Posterior cingulate gyrus (tissue), 11 donors: ENCODE measurements at regions of chr14 and their contacts with region 1.

Region 1: DNA sequence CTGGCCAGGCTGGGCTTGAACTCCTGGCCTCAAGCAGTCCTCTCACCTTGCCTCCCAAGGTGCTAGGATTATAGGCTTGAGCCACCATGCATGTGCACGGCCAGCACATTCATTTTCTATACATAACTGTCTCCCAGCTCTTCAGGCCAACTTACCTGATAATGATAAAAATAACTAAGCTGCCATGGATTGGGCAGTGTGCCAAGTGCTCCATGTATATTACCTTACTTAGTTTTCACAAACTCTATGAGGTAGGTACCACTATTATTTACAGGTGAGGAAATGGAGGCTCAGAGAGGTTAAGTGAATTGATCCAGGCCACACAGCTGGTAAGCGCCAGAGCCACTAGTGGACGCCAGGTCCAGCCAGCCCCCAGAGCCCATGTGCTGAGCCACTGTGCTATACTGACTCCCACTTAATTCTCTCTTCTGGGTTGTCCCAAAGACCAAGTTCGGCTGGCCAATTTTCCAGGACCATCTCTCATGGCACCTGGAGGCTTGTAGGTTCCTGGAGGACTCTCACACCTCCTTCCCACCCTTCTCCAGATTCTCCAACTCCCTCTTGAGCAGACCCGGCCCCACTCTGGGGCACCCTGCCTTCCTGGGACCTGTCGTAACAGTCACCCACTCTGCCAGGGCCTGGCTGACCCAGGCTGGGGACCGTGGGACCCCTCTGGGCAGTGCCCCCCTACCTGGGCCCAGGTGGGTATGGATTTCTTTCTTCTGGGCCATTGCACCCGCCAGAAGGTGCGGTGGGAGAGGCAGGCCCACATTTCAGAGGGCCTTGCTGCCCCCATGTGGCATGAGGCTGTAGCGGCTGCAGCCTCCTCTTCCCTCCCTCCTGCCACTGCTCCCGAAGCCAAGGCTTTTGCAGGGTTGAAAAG is 30.2 kb upstream of the CIPC start:
- DNase-seq: peak; percentile 67 to 97 (median 77)

Region 2: GRCh38 chr14:77023001-77023996 is 44.6 kb before region 1 on chr14:
- intact Hi-C with region 1: loop called (anchors 5 kb)
- DNase-seq: peak in 2 of 10 donors; percentile 26 to 88

Region 3: GRCh38 chr14:77033622-77034521 is 34.0 kb before region 1 on chr14:
- intact Hi-C with region 1: no loop called
- DNase-seq: peak in 8 of 10 donors; percentile 44 to 95 (median 68)